GM10248 (cell line): ENCODE measurements at regions of chr5 and their contacts with region 1.

Region 1: GRCh38 chr5:1167728-1168709 is 33.4 kb upstream of the SLC6A19 start:
- DNase-seq: peak; percentile 82
- CTCF ChIP-seq: peak; percentile 85

Region 2: GRCh38 chr5:1152156-1152555 is 15.9 kb before region 1 on chr5:
- CTCF ChIA-PET with region 1: interaction called, 11 read pairs
- POLR2A ChIA-PET with region 1: no interaction called
- DNase-seq: no peak
- CTCF ChIP-seq: no peak

Region 3: GRCh38 chr5:1652596-1653345 is 484.8 kb after region 1 on chr5:
- CTCF ChIA-PET with region 1: interaction called, 10 read pairs
- POLR2A ChIA-PET with region 1: no interaction called
- DNase-seq: no peak
- CTCF ChIP-seq: no peak